PC-9 (cell line): ENCODE measurements at regions of chr3 and their contacts with region 1.

Region 1: DNA sequence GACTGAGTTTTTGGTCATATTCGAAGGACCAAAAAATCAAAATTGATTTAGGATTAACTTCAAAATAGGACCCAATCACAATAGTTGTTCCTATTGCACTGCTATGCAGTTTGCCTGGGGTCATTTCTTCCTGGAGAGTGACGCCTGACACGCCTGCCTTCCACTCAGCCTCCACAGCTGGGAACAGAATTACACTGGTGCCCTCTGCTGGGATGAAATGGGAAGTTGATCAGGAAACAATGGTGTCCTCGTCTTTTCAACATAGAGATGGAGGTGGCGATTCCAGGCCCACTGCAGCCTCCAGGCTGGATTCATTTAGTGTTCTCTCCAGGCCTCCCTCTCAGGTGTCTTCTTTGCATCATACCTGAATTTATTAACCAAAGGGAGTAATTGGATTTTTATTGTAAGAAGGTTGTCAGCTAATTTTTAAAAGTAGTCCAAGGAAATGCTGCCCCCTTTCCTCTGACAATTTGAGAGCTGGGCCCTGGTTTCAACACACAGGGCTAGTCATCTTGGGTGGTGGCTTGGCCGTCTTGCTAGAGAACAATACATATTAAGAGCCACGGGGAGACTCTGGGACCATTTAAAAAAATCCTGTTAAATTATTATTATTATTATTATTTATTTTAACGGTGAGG is 69.7 kb downstream of the GAP43 start:
- DNase-seq: peak; percentile 48 to 77
- H3K4me3 ChIP-seq: no peak overlapping the region
- H3K27ac ChIP-seq: no peak overlapping the region
- H3K4me1 ChIP-seq: no peaks in the 10 kb centered on the region
- H3K27me3 ChIP-seq: no peaks in the 10 kb centered on the region
- CTCF ChIP-seq: peak; percentile 86

Region 2: GRCh38 chr3:114362815-114363214 is 1330.2 kb before region 1 on chr3:
- CTCF ChIA-PET with region 1: no interaction called
- POLR2A ChIA-PET with region 1: no interaction called
- intact Hi-C with region 1: loop called (anchors 2 kb)
- DNase-seq: no peak
- H3K4me3 ChIP-seq: no peak overlapping the region
- H3K27ac ChIP-seq: no peak overlapping the region
- H3K4me1 ChIP-seq: no peaks in the 10 kb centered on the region
- H3K27me3 ChIP-seq: no peaks in the 10 kb centered on the region
- CTCF ChIP-seq: peak; percentile 66

Region 3: GRCh38 chr3:114827495-114827894 is 865.5 kb before region 1 on chr3:
- CTCF ChIA-PET with region 1: no interaction called
- POLR2A ChIA-PET with region 1: no interaction called
- intact Hi-C with region 1: loop called (anchors 1 kb)
- DNase-seq: peak in 1 of 2 experiments; percentile 2
- H3K4me3 ChIP-seq: no peak overlapping the region
- H3K27ac ChIP-seq: no peak overlapping the region
- H3K4me1 ChIP-seq: no peaks in the 10 kb centered on the region
- H3K27me3 ChIP-seq: no peaks in the 10 kb centered on the region
- CTCF ChIP-seq: peak; percentile 64

Region 4: DNA sequence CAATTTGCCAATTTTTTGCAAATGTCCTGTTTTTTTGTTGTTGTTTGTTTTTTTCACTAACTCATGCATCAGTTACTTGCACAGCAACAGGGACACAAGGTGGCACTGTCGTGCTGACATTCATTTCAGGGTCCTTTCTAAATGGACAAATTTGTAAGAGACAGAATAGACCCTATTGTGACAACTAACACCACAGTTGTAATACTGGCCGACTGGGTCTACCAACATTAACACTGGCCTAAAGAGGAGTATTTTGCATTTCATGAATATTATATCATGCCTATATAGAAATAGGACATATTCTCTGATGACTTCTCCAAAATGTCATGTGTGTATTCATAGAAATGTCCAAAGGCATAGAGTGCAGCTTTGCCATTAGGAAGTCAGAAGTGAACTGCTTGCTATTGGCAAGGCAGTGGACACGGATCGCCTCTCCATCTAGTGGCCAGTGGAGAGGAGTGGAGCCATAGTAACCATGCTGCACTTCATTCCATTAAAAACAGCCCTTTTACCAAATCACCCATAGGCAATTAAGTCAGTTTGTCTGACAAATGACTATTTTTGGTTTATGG is 600.7 kb before region 1 on chr3:
- CTCF ChIA-PET with region 1: interaction called, 9 read pairs
- POLR2A ChIA-PET with region 1: no interaction called
- intact Hi-C with region 1: loop called (anchors 1 kb)
- DNase-seq: peak in 1 of 2 experiments; percentile 40
- H3K4me3 ChIP-seq: no peak overlapping the region
- H3K27ac ChIP-seq: no peak overlapping the region
- H3K4me1 ChIP-seq: no peaks in the 10 kb centered on the region
- H3K27me3 ChIP-seq: no peaks in the 10 kb centered on the region
- CTCF ChIP-seq: peak; percentile 75

Region 5: GRCh38 chr3:115436767-115437301 is 256.2 kb before region 1 on chr3:
- CTCF ChIA-PET with region 1: no interaction called
- POLR2A ChIA-PET with region 1: no interaction called
- intact Hi-C with region 1: loop called (anchors 5 kb)
- DNase-seq: peak; percentile 48 to 52
- H3K4me3 ChIP-seq: no peak overlapping the region
- H3K27ac ChIP-seq: no peak overlapping the region
- H3K4me1 ChIP-seq: peaks cover 7% of the 10 kb centered on the region; the same call in 1 of the 2 replicates
- H3K27me3 ChIP-seq: no peaks in the 10 kb centered on the region
- CTCF ChIP-seq: peak; percentile 35; the same call in 1 of the 2 replicates

Region 6: DNA sequence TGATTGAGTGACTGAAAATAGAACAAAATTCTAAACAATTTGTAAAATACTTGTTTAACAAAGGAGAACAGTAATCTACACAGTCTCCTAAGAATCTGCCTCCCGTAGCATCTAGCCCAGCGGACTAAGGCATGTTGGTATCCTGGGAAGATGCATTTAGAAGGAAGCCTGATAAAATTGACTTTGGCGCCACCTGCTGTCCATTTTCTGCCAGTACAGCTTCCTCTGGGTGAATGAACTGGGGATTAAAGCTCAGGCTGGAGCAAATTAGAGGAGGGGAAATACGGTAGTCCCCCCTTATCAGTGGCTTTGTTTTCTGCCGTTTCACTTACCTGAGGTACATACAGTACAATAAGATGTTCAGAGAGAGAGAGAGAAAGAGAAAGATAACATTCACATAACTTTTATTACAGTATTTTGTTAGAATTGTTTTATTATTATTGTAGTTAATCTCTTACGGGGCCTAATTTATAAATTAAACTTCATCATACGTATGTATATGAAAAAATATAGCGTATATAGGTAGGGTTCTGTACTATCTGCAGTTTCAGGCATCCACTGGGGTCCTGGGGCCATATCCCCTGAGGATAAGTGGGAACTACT is 121.9 kb after region 1 on chr3:
- CTCF ChIA-PET with region 1: no interaction called
- POLR2A ChIA-PET with region 1: no interaction called
- intact Hi-C with region 1: loop called (anchors 1 kb)
- DNase-seq: peak in 1 of 2 experiments; percentile 76
- H3K4me3 ChIP-seq: no peak overlapping the region
- H3K27ac ChIP-seq: no peak overlapping the region
- H3K4me1 ChIP-seq: no peaks in the 10 kb centered on the region
- H3K27me3 ChIP-seq: no peaks in the 10 kb centered on the region
- CTCF ChIP-seq: peak; percentile 99